ENCODE measurements at regions of chr9 and their contacts with region 1.

Region 1: GRCh38 chr9:35945341-35946018 is 12.5 kb downstream of the OR2S2 start:
- DNase-seq: peak; percentile 89

Region 2: DNA sequence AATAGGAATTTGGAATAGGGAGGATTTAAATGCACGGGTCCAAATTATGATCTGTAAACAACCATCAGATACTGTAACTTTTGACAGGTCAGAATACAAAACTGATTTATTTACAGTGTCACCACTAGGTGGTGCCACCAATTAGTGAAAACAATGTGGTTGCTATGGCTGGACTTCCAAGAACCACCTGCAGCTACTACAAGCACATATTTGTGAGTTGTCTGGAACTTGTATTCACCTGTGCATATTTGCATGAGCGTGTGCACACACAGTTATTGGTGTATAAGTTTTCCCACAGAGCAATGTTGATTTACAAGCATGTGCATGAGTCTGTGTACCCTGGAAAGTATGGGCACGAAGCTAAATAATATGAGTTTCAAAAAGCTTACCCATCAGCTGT is 42.4 kb before region 1 on chr9:
- CTCF ChIA-PET with region 1: interaction called, 11 read pairs
- POLR2A ChIA-PET with region 1: interaction called, 3 read pairs
- DNase-seq: peak; percentile 62

Region 3: GRCh38 chr9:35967042-35967441 is 21.6 kb after region 1 on chr9:
- CTCF ChIA-PET with region 1: no interaction called
- POLR2A ChIA-PET with region 1: no interaction called
- DNase-seq: no peak

Measured in HEK293T (cell line).